HepG2 (cell line): ENCODE measurements at regions of chr14 and their contacts with region 1.

Region 1: DNA sequence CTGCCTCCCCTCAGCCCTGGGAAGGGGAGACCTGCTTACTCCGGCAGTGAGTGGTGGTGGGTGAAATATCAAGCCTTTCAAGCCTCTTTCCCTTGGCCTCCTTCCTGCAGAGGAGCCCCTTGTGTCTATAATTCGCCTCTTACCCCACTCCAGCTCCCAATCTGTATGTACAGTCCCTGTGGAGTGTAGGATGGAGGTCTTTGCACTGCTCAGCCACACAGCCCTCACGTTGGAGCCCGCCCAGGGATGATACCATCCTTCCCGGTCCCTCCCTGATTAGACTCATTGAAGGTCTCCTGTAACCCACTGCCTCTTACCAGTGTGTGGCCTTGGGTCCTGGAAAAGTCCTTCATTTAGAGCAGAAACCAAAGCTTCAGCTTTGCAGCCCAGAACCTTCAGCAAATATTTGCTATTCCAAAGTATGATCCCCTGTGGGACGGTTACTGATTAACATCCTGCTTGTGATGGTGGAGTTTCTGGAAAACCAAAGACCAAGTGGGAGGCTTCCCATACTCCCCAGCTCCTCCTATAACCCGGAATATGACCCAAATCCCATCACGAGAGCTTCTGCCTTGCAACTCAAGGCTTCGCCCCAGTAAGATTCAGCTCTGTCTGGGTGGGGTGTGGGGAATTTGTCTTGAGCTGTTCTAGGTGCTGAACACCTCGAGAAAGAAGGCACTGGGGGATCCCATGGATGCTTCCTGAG is at the start of gene SERPINA10:
- DNase-seq: peak; percentile 99
- ATAC-seq: peak; percentile 95
- H3K4me3 ChIP-seq: peak within 1 kb of the TSS; percentile 48 to 84 (median 67)
- H3K27ac ChIP-seq: peak within 1 kb of the TSS; percentile 97
- H3K4me1 ChIP-seq: peaks cover 96% of the 10 kb centered on the region
- H3K27me3 ChIP-seq: no peaks in the 10 kb centered on the region; a peak in 1 of 5 replicates
- CTCF ChIP-seq: no peak
- EP300 ChIP-seq: peak; percentile 17 to 90; a peak in 2 of 4 replicates
- POLR2A ChIP-seq: peak; percentile 85 to 94
- RAD21 ChIP-seq: peak; percentile 20; the same call in 1 of the 2 replicates
- total RNA-seq, gene SERPINA10: 12.1 and 20.1 TPM in 2 replicates

Region 2: DNA sequence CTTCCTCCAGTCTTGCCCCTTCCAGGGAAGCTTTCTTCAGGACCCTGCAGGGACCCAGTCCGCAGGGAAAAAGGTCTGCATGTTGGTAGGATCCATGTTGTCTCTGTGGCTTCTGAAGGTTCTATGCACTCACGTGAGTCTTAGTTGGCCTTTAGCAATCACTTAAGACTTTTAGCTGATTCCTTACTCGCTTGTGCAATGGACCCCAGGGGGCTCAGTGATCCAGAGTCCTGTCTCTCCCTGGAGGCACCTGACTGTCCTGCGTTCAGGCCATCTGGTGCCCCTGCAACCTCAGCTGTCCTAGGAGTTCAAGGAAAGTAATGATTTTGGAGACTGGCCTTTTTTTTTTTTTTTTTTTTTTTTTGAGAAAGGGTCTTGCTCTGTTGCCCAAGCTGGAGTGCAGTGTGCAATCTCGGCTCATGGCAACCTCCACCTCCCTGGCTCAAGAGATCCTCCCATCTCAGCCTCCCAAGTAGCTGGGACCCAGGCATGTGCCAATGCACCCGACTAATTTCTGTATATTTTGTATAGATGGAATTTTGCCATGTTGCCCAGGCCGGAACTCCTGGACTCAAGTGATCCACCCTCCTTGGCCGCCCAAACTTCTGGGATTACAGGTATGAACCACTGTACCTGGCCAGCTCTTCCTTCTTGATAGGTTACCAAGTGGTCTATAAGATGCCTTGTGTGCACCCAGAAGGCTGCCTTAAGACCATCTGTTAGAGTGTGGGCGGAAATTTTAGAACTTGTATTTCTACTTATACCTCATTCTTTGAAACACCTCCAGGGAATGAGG is 168.2 kb before region 1 on chr14:
- CTCF ChIA-PET with region 1: no interaction called
- POLR2A ChIA-PET with region 1: no interaction called
- in situ Hi-C with region 1: no loop called
- intact Hi-C with region 1: no loop called
- DNase-seq: no peak
- ATAC-seq: no peak
- H3K4me3 ChIP-seq: no peak overlapping the region
- H3K27ac ChIP-seq: no peak overlapping the region
- H3K4me1 ChIP-seq: peaks cover 23% of the 10 kb centered on the region
- H3K27me3 ChIP-seq: peaks cover 2 to 33% of the 10 kb centered on the region in 2 experiments
- CTCF ChIP-seq: no peak
- EP300 ChIP-seq: no peak
- POLR2A ChIP-seq: no peak
- RAD21 ChIP-seq: no peak

Region 3: GRCh38 chr14:94136575-94137331 is 156.3 kb before region 1 on chr14:
- CTCF ChIA-PET with region 1: no interaction called
- POLR2A ChIA-PET with region 1: interaction called, 10 read pairs
- in situ Hi-C with region 1: no loop called
- intact Hi-C with region 1: loop called (anchors 5 kb)
- DNase-seq: peak; percentile 80
- ATAC-seq: peak; percentile 93
- H3K4me3 ChIP-seq: peak overlapping the region in 2 of 3 experiments; percentile 19 to 48; a peak in 3 of 6 replicates
- H3K27ac ChIP-seq: no peak overlapping the region
- H3K4me1 ChIP-seq: peaks cover 27% of the 10 kb centered on the region
- H3K27me3 ChIP-seq: peaks cover 2 to 25% of the 10 kb centered on the region in 2 experiments; a peak in 4 of 5 replicates
- CTCF ChIP-seq: peak; percentile 98
- EP300 ChIP-seq: no peak
- POLR2A ChIP-seq: no peak
- RAD21 ChIP-seq: peak; percentile 95

Region 4: GRCh38 chr14:94278731-94279130 is 14.3 kb before region 1 on chr14:
- CTCF ChIA-PET with region 1: no interaction called
- POLR2A ChIA-PET with region 1: interaction called, 122 read pairs
- in situ Hi-C with region 1: no loop called
- intact Hi-C with region 1: loop called (anchors 1 kb)
- DNase-seq: no peak
- ATAC-seq: no peak
- H3K4me3 ChIP-seq: no peak overlapping the region
- H3K27ac ChIP-seq: no peak overlapping the region
- H3K4me1 ChIP-seq: peaks cover 21% of the 10 kb centered on the region
- H3K27me3 ChIP-seq: no peaks in the 10 kb centered on the region; a peak in 1 of 5 replicates
- CTCF ChIP-seq: no peak
- EP300 ChIP-seq: no peak
- POLR2A ChIP-seq: no peak
- RAD21 ChIP-seq: no peak

Region 5: DNA sequence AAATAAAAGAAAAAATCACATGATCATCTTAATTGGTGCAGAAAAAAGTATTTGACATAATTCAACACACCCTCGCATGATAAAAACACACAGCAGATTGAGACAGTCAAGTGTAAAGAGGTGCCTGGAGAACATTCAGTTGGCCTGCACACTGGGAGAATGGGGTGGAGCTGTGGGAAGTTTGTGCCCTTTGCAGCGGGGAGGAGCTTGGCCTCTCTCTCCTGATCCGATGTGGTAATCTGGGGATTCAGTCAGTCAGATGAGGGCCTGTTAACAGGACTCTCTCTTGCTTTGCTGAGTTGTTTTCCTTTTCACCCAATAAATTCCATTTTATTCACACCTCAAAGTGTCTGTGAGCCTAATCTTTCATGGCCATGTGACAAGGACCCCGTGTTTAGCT is 24.2 kb after region 1 on chr14:
- CTCF ChIA-PET with region 1: no interaction called
- POLR2A ChIA-PET with region 1: interaction called, 23 read pairs
- in situ Hi-C with region 1: no loop called
- intact Hi-C with region 1: no loop called
- DNase-seq: peak; percentile 78
- ATAC-seq: peak; percentile 86
- H3K4me3 ChIP-seq: peak overlapping the region in 1 of 3 experiments; percentile 47; a peak in 1 of 6 replicates
- H3K27ac ChIP-seq: peak overlapping the region; percentile 63
- H3K4me1 ChIP-seq: peaks cover 96% of the 10 kb centered on the region
- H3K27me3 ChIP-seq: no peaks in the 10 kb centered on the region
- CTCF ChIP-seq: peak; percentile 7; the same call in 1 of the 2 replicates
- EP300 ChIP-seq: no peak
- POLR2A ChIP-seq: peak; percentile 44 to 73; a peak in 3 of 4 replicates
- RAD21 ChIP-seq: no peak

Region 6: DNA sequence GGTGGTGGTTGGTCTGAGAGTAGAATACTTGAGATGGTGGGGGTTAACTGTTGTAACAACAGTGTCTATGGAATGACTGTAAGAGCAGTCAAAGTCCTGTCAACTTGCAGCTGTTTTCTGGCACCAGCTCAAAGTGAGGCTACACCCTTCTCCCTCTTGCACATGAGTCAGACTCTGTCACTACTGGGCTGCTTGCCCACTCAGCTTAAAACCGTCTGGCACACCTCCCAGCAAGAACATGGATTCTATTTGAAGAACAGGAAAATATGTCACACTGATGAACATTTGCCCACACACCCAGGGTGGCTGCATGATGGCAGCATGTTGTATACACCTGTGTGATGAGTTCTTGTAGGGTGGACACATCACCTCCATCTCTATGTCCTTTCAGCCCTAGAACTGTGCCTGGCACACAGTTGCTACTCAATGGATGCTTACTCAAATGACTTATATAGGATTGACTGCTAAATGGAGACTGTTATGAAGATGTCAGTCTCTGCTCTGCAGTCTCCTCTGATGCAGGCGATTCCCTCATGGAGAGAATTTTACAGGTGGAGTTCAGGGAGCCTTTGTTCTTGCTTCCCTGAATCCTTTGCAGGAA is 49.4 kb after region 1 on chr14:
- CTCF ChIA-PET with region 1: no interaction called
- POLR2A ChIA-PET with region 1: interaction called, 13 read pairs
- in situ Hi-C with region 1: no loop called
- intact Hi-C with region 1: no loop called
- DNase-seq: peak; percentile 82
- ATAC-seq: peak; percentile 25; the same call in 2 of the 3 replicates
- H3K4me3 ChIP-seq: no peak overlapping the region
- H3K27ac ChIP-seq: no peak overlapping the region
- H3K4me1 ChIP-seq: peaks cover 96% of the 10 kb centered on the region
- H3K27me3 ChIP-seq: no peaks in the 10 kb centered on the region; a peak in 1 of 5 replicates
- CTCF ChIP-seq: no peak
- EP300 ChIP-seq: peak in 1 of 2 experiments; percentile 45; a peak in 1 of 4 replicates
- POLR2A ChIP-seq: no peak
- RAD21 ChIP-seq: no peak

Region 7: DNA sequence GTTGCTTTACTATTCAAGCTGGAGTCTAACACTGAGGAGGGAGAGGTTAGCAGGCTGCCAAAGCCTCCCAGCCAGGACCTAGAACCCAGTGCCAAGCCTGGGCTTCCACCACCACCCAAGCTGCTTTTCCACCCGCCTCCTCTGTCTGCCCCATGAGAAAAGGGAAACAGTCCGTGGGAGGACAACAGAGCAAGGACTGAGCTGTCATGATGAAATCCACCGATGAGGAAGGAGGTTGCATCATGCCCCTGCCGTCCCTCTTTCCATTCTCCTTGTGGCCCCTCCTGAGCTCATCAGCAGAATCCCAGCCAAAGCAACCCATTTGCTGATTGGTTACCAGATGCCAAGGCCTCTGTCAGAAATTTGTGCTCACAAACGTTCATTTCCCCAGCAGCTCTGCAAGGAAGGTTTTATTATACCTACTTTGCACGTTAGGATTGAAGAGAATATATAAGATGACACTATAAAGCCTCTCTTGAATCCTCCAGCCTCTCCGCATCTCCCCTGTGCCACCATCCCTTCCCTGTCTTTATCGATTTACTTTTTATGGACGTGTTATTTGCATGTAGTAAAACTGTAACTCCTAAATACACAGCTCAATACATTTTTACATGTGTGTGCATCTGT is 101.7 kb after region 1 on chr14:
- CTCF ChIA-PET with region 1: no interaction called
- POLR2A ChIA-PET with region 1: interaction called, 16 read pairs
- in situ Hi-C with region 1: no loop called
- intact Hi-C with region 1: no loop called
- DNase-seq: peak; percentile 74
- ATAC-seq: peak; percentile 6; the same call in 2 of the 3 replicates
- H3K4me3 ChIP-seq: peak overlapping the region; percentile 28 to 67 (median 35)
- H3K27ac ChIP-seq: peak overlapping the region; percentile 87
- H3K4me1 ChIP-seq: peaks cover 100% of the 10 kb centered on the region
- H3K27me3 ChIP-seq: no peaks in the 10 kb centered on the region
- CTCF ChIP-seq: no peak
- EP300 ChIP-seq: peak in 1 of 2 experiments; percentile 71; a peak in 2 of 4 replicates
- POLR2A ChIP-seq: peak in 1 of 2 experiments; percentile 55; a peak in 1 of 4 replicates
- RAD21 ChIP-seq: no peak